Activated T-helper 1 cell treated with anti-CD3 and anti-CD28 coated beads, Interleukin-12 subunit alpha, Interleukin-12 subunit beta, Interleukin-2, Interleukin-4 antibody, amounts not matched to agents 30 ng/mL and 10 ng/mL and 1 ng/mL, durations not matched to agents 14 hours and 24 hours and 36 hours (primary cell): ENCODE measurements at regions of chr18 and their contacts with region 1.

Region 1: GRCh38 chr18:54149078-54149697 is 75.3 kb downstream of the MBD2 start:
- DNase-seq: peak; percentile 31
- H3K4me3 Mint-ChIP-seq: peak overlapping the region; percentile 73
- H3K27ac Mint-ChIP-seq: peak overlapping the region; percentile 96
- H3K4me1 Mint-ChIP-seq: peaks cover 65% of the 10 kb centered on the region
- H3K27me3 Mint-ChIP-seq: no peaks in the 10 kb centered on the region

Region 2: DNA sequence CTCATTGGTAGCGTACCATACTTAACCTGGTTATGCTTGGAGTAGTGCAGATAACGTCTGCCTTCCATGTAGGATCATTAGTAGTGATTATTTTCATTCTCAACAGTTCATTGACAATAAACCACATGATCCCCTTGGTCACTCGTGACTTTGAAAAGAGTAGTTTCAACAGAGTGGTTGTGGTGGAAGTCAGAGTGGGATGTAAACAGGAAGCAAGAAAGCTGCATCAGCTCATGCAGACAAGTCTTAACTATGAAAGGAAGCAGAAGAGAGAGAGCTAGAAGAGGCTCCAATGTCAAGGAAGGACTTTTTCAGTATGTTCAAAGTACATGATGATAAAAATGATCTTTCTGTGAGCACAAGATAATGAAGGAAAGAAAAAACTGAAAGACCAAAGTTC is 212.2 kb before region 1 on chr18:
- intact Hi-C with region 1: loop called (anchors 1 kb)
- DNase-seq: no peak
- H3K4me3 Mint-ChIP-seq: no peak overlapping the region
- H3K27ac Mint-ChIP-seq: peak overlapping the region; percentile 45
- H3K4me1 Mint-ChIP-seq: peaks cover 25% of the 10 kb centered on the region
- H3K27me3 Mint-ChIP-seq: no peaks in the 10 kb centered on the region

Region 3: DNA sequence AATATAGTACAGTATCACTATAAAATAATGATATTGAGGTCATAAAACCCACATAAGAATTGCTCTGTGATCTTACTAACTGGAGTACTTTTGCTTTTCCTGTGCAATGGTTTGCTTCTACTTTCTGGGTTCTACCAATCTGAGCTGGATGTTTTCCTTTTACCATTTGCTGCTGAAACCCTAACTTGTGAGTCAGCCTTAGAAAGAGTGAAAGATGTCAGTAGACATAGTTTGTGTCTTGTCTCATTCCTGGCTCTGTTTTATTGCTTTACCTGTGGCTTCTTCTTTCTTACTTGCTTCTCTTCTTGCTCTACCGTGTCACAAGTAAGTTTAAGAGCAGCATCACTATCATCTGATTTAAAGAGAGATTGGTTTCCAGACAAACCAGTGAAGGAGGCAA is 14.3 kb after region 1 on chr18:
- intact Hi-C with region 1: loop called (anchors 1 kb)
- DNase-seq: no peak
- H3K4me3 Mint-ChIP-seq: no peak overlapping the region
- H3K27ac Mint-ChIP-seq: peak overlapping the region; percentile 42
- H3K4me1 Mint-ChIP-seq: peaks cover 52% of the 10 kb centered on the region
- H3K27me3 Mint-ChIP-seq: no peaks in the 10 kb centered on the region

Region 4: DNA sequence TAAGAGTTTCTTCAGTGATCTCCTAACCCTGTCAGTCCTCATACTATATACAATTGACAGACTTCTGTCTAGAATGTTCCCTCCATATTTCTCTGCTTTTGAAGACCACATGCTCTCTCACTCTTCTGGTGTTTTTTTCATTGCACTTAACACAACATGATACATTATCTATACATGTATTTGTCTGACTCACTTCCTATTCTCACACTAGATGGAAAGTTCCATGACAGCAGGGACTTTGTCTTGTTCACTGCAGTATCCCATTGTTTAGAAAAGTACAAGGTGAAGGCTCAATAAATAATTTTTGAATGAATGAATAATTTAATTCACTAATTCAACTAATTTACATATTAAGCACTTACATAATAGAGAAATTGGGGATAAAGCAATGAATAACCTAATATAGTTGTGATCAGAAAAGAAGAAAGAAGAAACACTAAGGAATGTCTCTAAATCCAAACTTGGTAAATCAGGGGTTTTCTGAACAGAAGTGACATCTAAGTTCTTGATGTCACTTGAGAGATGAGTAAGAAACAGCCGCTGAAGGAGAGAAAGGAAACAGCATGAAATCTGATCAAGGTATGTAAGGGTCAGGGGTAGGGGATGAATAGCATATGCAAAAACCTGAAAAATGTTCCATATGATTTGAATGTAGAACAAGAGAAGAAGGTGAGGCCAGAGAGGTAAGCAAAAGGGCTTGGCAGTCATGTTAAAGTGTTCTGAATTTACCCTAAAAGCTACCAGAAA is 32.8 kb after region 1 on chr18:
- intact Hi-C with region 1: loop called (anchors 1 kb)
- DNase-seq: no peak
- H3K4me3 Mint-ChIP-seq: no peak overlapping the region
- H3K27ac Mint-ChIP-seq: no peak overlapping the region
- H3K4me1 Mint-ChIP-seq: peaks cover 22% of the 10 kb centered on the region
- H3K27me3 Mint-ChIP-seq: no peaks in the 10 kb centered on the region

Region 5: GRCh38 chr18:54224379-54225014 is 75.3 kb after region 1 on chr18 and contains the start of gene MBD2:
- intact Hi-C with region 1: loop called (anchors 1 kb)
- DNase-seq: peak; percentile 94
- H3K4me3 Mint-ChIP-seq: peak within 1 kb of the TSS; percentile 98
- H3K27ac Mint-ChIP-seq: peak within 1 kb of the TSS; percentile 98
- H3K4me1 Mint-ChIP-seq: peaks cover 43% of the 10 kb centered on the region
- H3K27me3 Mint-ChIP-seq: no peaks in the 10 kb centered on the region
- total RNA-seq, gene MBD2: 223 and 242 TPM in 2 replicates

Region 6: GRCh38 chr18:54269893-54270844 is 121.0 kb after region 1 on chr18:
- intact Hi-C with region 1: loop called (anchors 1 kb)
- DNase-seq: peak; percentile 54
- H3K4me3 Mint-ChIP-seq: peak overlapping the region; percentile 81
- H3K27ac Mint-ChIP-seq: peak overlapping the region; percentile 96
- H3K4me1 Mint-ChIP-seq: peaks cover 44% of the 10 kb centered on the region
- H3K27me3 Mint-ChIP-seq: no peaks in the 10 kb centered on the region

Region 7: GRCh38 chr18:54357660-54358494 is 208.7 kb after region 1 on chr18 and contains the starts of genes C18orf54 and STARD6:
- intact Hi-C with region 1: loop called (anchors 1 kb)
- DNase-seq: peak; percentile 93
- H3K4me3 Mint-ChIP-seq: peak within 1 kb of the TSS; percentile 98
- H3K27ac Mint-ChIP-seq: peak within 1 kb of the TSS; percentile 97
- H3K4me1 Mint-ChIP-seq: peaks cover 34% of the 10 kb centered on the region
- H3K27me3 Mint-ChIP-seq: no peaks in the 10 kb centered on the region
- total RNA-seq, gene C18orf54: 10.4 and 10.7 TPM in 2 replicates
- total RNA-seq, gene STARD6: 0.54 and 0.65 TPM in 2 replicates